Pancreas (tissue), 10 donors: ENCODE measurements at regions of chr19 and their contacts with region 1.

Region 1: GRCh38 chr19:13880059-13881043 is 3.4 kb downstream of the NANOS3 start:
- DNase-seq: peak; percentile 96 to 99 (median 99)
- ATAC-seq: peak; percentile 87 to 95 (median 90)
- H3K4me3 ChIP-seq: peak overlapping the region in 1 of 4 donors; percentile 23
- H3K27ac ChIP-seq: peak overlapping the region; percentile 59 to 85 (median 72)
- H3K4me1 ChIP-seq: peaks cover 9 to 33% (median 9%) of the 10 kb centered on the region in 3 donors
- H3K27me3 ChIP-seq: no peaks in the 10 kb centered on the region
- CTCF ChIP-seq: peak; percentile 98 to 100 (median 100)

Region 2: GRCh38 chr19:13833330-13834243 is 46.8 kb before region 1 on chr19:
- intact Hi-C with region 1: no loop called
- DNase-seq: peak; percentile 92 to 98 (median 97)
- ATAC-seq: peak; percentile 92 to 96 (median 95)
- H3K4me3 ChIP-seq: peak overlapping the region in 3 of 4 donors; percentile 6 to 40 (median 26)
- H3K27ac ChIP-seq: peak overlapping the region; percentile 20 to 72 (median 49)
- H3K4me1 ChIP-seq: peaks cover 0 to 19% (median 0%) of the 10 kb centered on the region in 3 donors
- H3K27me3 ChIP-seq: no peaks in the 10 kb centered on the region
- CTCF ChIP-seq: peak in 2 of 4 donors; percentile 11 to 34

Region 3: GRCh38 chr19:14073261-14073924 is 193.0 kb after region 1 on chr19:
- intact Hi-C with region 1: loop called in 2 of 3 experiments (anchors 5 kb)
- DNase-seq: peak; percentile 71 to 94 (median 85)
- ATAC-seq: peak; percentile 33 to 62 (median 44)
- H3K4me3 ChIP-seq: peak overlapping the region; percentile 80 to 88 (median 84)
- H3K27ac ChIP-seq: peak overlapping the region; percentile 93 to 98 (median 96)
- H3K4me1 ChIP-seq: peaks cover 3 to 11% (median 10%) of the 10 kb centered on the region in 3 donors
- H3K27me3 ChIP-seq: no peaks in the 10 kb centered on the region
- CTCF ChIP-seq: peak in 2 of 4 donors; percentile 12 to 30